ENCODE measurements at regions of chr2 and their contacts with region 1.

Region 1: DNA sequence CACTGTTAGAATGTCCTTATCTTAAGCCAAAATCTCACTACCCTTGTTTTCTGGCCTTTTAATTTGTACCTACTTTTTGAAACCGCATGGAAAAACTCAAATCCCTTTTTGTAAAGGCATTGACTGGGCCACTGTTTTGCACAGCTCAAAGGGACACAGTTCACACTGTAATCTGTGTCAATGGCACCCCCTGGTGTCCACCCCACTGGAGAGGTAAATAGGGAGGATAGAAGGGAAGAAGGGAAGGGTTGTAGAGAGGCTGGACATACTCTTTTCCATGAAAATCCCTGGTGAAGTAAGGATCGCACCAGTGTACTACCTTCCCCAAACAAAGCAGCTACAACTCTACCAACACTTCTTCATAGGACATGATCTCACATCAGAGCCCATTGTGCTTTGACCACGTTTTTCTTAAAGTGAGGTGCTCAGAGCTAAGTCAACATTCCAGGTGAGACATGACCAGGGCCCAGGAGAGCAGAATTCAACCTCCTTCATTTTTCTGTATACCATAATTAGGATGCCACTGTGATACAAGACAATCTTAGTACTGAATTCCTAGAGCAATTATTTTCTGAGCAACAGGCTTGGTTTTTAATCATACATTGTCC is 92.4 kb upstream of the RMDN2 start:
- DNase-seq: no peak
- H3K4me3 ChIP-seq: no peak overlapping the region
- H3K27me3 ChIP-seq: no peaks in the 10 kb centered on the region
- CTCF ChIP-seq: peak; percentile 74

Region 2: GRCh38 chr2:37402636-37403035 is 430.1 kb before region 1 on chr2:
- CTCF ChIA-PET with region 1: interaction called, 149 read pairs
- POLR2A ChIA-PET with region 1: no interaction called
- DNase-seq: no peak
- H3K4me3 ChIP-seq: no peak overlapping the region
- H3K27me3 ChIP-seq: no peaks in the 10 kb centered on the region
- CTCF ChIP-seq: no peak